Caco-2 (cell line): ENCODE measurements at regions of chr16 and their contacts with region 1.

Region 1: DNA sequence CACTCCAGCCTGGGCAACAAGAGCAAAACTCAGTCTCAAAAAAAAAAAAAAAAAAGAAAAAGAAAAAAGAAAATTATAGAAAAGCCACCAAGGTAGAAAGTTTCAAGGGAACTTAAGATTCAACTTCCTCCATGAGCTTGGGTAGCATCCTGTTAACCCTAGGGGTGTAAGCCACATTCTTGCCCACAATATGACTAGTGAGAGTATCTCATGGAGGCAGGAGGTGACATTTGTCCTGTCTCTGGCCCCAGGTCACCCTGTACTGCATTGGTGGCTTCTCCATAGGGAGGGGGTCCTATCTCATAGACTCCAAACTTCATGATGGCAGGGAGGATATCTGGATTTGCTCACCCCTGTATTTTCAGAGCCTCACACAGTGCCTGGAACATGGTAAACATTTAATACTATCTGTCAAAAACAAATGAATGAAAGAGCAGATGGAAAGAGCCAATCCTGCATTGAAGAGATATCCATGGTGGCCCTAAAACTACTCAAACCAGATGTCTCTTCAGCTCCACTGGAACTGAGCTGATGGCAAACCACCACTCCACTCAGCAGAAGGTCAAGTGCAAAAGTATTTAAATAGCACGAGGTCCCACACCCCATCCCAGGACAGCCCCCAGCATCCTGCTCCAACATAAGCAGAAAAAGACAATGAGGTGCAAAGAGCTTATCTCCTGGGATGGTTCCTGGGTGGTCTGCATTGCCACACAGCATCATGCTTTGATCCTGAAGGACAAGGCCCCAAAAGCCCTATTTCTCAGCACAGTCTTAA is 50.3 kb downstream of the EMP2 start:
- DNase-seq: no peak
- H3K4me3 ChIP-seq: no peak overlapping the region
- H3K4me3 Mint-ChIP-seq: no peak overlapping the region
- H3K27ac Mint-ChIP-seq: no peak overlapping the region
- H3K4me1 ChIP-seq: peaks cover 13% of the 10 kb centered on the region
- H3K4me1 Mint-ChIP-seq: peaks cover 18% of the 10 kb centered on the region
- H3K27me3 ChIP-seq: no peaks in the 10 kb centered on the region
- H3K27me3 Mint-ChIP-seq: no peaks in the 10 kb centered on the region
- CTCF ChIP-seq: no peak

Region 2: DNA sequence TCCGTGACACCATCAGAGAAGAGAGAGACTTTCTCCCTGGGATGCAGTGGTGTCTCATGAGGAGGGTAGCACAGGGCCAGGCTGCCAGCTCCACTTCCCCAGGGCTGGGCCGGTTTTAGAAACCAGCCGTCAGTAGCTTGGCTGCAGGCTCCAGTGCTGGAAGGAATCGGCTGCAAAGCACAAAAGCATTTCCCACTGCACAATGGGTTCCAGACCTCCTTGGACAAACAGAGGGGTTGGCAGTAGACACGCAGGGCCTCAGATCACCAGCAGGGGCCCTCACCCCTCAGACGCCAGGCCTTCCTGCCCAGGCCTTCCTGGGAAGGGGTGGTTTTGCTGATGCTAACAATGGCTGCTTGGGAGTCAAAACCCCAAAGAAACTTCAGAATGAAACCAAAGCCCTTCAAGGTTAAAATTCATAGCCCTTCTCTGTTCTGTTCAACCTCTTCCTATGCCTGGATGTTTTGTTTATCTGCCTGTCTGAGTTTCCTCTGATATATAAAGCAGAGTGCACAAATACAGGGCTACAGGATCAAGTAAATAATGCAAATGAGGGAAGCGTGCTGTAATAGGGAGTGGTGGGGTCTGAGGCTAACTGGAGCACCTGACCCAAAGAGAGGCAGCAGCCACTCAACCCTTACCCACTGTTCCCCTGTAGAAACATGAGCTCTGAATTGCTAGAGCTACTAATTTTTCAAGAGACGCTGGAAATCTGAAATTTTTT is 138.4 kb after region 1 on chr16:
- CTCF ChIA-PET with region 1: no interaction called
- POLR2A ChIA-PET with region 1: no interaction called
- intact Hi-C with region 1: loop called (anchors 5 kb)
- DNase-seq: peak; percentile 45 to 56
- H3K4me3 ChIP-seq: no peak overlapping the region
- H3K4me3 Mint-ChIP-seq: no peak overlapping the region
- H3K27ac Mint-ChIP-seq: no peak overlapping the region
- H3K4me1 ChIP-seq: no peaks in the 10 kb centered on the region
- H3K4me1 Mint-ChIP-seq: peaks cover 5% of the 10 kb centered on the region
- H3K27me3 ChIP-seq: no peaks in the 10 kb centered on the region
- H3K27me3 Mint-ChIP-seq: no peaks in the 10 kb centered on the region
- CTCF ChIP-seq: peak; percentile 49 to 60